Psoas muscle (tissue), 8 donors: ENCODE measurements at regions of chr17 and their contacts with region 1.

Region 1: GRCh38 chr17:31260151-31260550 is 36.9 kb downstream of the OMG start:
- DNase-seq: no peak
- ATAC-seq: no peak
- H3K4me3 ChIP-seq: no peak overlapping the region
- H3K27ac ChIP-seq: no peak overlapping the region
- H3K4me1 ChIP-seq: no peaks in the 10 kb centered on the region
- H3K27me3 ChIP-seq: no peaks in the 10 kb centered on the region
- CTCF ChIP-seq: no peak

Region 2: GRCh38 chr17:31248986-31249834 is 10.9 kb before region 1 on chr17:
- intact Hi-C with region 1: loop called in 1 of 2 experiments (anchors 1 kb)
- DNase-seq: no peak
- ATAC-seq: no peak
- H3K4me3 ChIP-seq: no peak overlapping the region
- H3K27ac ChIP-seq: no peak overlapping the region
- H3K4me1 ChIP-seq: no peaks in the 10 kb centered on the region
- H3K27me3 ChIP-seq: no peaks in the 10 kb centered on the region
- CTCF ChIP-seq: no peak

Region 3: DNA sequence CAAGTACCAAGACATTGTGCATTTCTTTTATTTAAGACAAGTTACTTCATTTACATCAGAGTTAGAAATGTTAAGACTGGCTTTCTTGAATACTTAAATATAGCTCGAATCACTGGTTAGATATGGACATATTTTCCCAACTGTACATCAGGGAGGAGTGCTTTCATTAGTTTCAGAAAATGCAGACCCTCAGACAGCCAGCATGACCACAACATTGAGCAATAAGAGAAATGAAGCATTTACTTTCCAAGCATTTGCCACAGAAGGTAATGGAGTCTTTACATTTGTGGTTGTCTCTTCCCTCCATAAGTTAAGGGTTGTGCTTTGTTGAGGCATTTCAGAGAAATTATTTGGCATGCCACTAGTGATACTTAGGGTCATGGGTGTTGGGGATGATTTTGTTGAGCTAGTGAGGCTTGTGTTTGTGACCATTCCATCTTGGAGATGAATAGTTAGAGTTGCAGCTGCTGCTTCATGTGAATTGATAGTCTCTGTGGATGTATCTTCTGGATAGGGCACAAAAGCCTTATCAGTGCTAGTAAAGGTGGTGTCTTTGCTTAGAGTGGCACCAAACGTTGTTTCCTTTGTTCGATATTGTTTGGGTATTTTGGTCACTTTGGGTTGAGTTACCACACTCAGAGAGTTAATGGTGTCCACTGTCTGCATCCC is 34.8 kb after region 1 on chr17:
- intact Hi-C with region 1: no loop called
- DNase-seq: no peak
- ATAC-seq: no peak
- H3K4me3 ChIP-seq: no peak overlapping the region
- H3K27ac ChIP-seq: no peak overlapping the region
- H3K4me1 ChIP-seq: no peaks in the 10 kb centered on the region
- H3K27me3 ChIP-seq: no peaks in the 10 kb centered on the region
- CTCF ChIP-seq: no peak